Activated CD4-positive, alpha-beta T cell treated with anti-CD3 and anti-CD28 coated beads, Interleukin-2, amount 10 ng/mL, durations not matched to agents 24 days and 14 days (primary cell): ENCODE measurements at regions of chr3 and their contacts with region 1.

Region 1: DNA sequence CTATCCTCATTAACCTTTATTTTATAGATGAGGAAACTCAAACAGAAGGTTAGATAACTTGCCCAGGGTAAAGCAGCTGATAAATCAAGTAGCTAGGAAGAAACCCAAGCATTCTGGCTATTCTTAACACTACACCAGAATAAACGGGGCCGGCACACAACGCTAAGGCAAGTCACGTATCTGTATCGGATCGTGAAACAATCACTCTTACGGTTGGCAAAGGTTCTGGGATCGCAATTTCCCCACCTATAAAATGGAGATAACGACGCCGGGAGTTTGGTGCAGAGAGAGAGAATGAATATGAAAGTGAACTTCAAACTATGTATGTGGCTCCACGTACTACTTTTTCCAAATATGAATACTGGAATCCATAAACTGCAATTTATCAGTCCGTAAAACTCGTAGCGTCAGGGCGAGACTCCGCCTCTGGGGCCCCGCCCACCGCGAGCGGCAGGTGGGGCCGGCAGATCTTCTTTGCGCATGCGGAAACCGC is 252 bp upstream of the ARMC8 start:
- DNase-seq: peak; percentile 96
- H3K4me3 Mint-ChIP-seq: peak overlapping the region; percentile 92
- H3K27ac Mint-ChIP-seq: peak overlapping the region; percentile 96
- H3K4me1 Mint-ChIP-seq: peaks cover 31% of the 10 kb centered on the region
- H3K27me3 Mint-ChIP-seq: peaks cover 16% of the 10 kb centered on the region

Region 2: DNA sequence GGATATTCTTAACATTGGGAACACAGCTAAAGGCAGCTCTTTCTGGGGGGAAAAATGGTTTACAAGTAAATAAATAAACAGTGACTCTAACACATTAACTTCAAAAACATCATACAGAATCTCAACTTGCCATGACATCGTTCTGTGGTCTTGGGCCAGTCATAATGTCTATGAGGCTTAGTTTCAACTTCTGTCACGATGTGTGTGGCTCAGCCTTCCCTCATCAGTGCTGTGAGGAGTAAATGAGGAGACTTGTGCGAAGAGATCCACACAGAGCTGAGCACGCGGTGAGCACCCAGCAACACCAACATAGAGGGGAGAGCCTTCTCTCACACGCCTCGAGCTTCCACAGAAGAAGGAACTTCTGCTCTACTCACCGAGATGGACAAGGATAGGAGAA is 120.5 kb before region 1 on chr3:
- intact Hi-C with region 1: no loop called
- DNase-seq: peak; percentile 72
- H3K4me3 Mint-ChIP-seq: peak overlapping the region; percentile 2
- H3K27ac Mint-ChIP-seq: peak overlapping the region; percentile 81
- H3K4me1 Mint-ChIP-seq: peaks cover 12% of the 10 kb centered on the region
- H3K27me3 Mint-ChIP-seq: peaks cover 17% of the 10 kb centered on the region

Region 3: GRCh38 chr3:138174421-138175122 is 12.3 kb before region 1 on chr3 and contains the start of gene DBR1:
- intact Hi-C with region 1: loop called (anchors 1 kb)
- DNase-seq: peak; percentile 93
- H3K4me3 Mint-ChIP-seq: peak within 1 kb of the TSS; percentile 98
- H3K27ac Mint-ChIP-seq: peak within 1 kb of the TSS; percentile 94
- H3K4me1 Mint-ChIP-seq: peaks cover 29% of the 10 kb centered on the region
- H3K27me3 Mint-ChIP-seq: peaks cover 3% of the 10 kb centered on the region
- total RNA-seq, gene DBR1: 27.3 and 28.3 TPM in 2 replicates

Region 4: DNA sequence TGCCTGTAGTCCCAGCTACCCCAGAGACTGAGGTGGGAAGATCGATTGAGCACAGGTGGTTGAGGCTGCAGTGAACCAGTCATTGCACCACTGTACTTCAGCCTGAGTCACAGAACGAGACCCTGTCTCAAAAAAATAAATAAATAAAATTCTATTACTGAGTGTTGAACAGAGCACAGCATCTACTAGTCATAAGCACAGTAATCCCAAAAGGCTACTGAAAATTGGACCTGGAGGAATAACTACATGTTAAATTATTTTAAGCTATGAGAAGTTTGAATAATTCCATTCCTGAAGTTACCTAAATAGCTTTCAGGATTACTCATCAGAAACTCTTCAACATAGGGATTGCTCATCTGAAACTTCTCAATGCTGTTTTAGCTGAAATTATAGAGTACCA is 43.7 kb after region 1 on chr3:
- intact Hi-C with region 1: loop called (anchors 5 kb)
- DNase-seq: no peak
- H3K4me3 Mint-ChIP-seq: no peak overlapping the region
- H3K27ac Mint-ChIP-seq: no peak overlapping the region
- H3K4me1 Mint-ChIP-seq: peaks cover 8% of the 10 kb centered on the region
- H3K27me3 Mint-ChIP-seq: no peaks in the 10 kb centered on the region

Region 5: DNA sequence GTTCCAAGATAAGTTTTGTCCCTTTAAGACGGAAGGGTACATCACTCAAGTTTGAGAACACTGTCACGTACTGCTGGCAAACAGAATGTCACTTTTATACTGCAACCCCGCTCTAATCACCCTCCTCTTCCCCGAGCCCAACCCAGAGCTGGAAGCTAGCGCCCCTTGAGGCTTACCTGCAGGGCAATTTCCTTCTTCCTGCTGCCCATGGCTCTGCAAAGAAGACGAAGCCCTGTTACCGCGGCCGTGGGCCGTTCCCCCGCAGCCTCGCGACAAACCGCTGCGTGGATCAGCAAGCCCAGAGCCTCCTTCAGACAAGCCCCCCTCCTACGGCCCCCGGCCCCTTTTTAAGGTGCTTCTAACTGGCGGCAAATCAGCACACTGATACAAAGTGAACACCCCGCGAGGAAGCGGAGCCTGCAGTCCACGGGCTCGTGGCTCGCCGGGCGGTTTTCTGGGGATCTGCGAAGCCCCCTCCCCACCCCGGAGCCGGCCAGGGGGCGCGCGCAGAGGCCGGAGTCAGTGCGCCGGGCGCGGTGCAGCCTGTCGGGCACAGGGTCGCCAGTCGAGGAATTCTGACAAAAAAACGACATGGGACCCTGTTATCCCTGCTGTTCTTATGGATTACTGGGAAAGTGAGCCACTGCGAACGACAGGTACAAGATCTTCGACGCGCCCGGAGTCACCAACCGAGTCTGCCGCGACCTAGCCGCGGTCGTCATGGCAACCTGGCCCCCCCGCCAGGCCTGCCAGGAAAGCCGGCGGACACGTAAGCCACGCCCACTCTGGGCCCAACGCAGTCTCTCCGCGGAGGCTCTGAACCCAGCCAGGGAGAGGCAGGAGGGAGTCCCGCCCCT is 142.5 kb after region 1 on chr3 and contains the start of gene NME9:
- intact Hi-C with region 1: loop called (anchors 1 kb)
- DNase-seq: peak; percentile 96
- H3K4me3 Mint-ChIP-seq: peak within 1 kb of the TSS; percentile 91
- H3K27ac Mint-ChIP-seq: peak within 1 kb of the TSS; percentile 89
- H3K4me1 Mint-ChIP-seq: peaks cover 23% of the 10 kb centered on the region
- H3K27me3 Mint-ChIP-seq: no peaks in the 10 kb centered on the region
- total RNA-seq, gene NME9: not detected in 2 replicates

Region 6: GRCh38 chr3:138417559-138417982 is 230.7 kb after region 1 on chr3:
- intact Hi-C with region 1: loop called (anchors 10 kb)
- DNase-seq: peak; percentile 88
- H3K4me3 Mint-ChIP-seq: no peak overlapping the region
- H3K27ac Mint-ChIP-seq: no peak overlapping the region
- H3K4me1 Mint-ChIP-seq: peaks cover 2% of the 10 kb centered on the region
- H3K27me3 Mint-ChIP-seq: peaks cover 11% of the 10 kb centered on the region

Region 7: GRCh38 chr3:139353920-139354556 is 1167.2 kb after region 1 on chr3:
- intact Hi-C with region 1: loop called (anchors 10 kb)
- DNase-seq: no peak
- H3K4me3 Mint-ChIP-seq: no peak overlapping the region
- H3K27ac Mint-ChIP-seq: no peak overlapping the region
- H3K4me1 Mint-ChIP-seq: peaks cover 16% of the 10 kb centered on the region
- H3K27me3 Mint-ChIP-seq: no peaks in the 10 kb centered on the region